ENCODE measurements at regions of chr6 and their contacts with region 1.

Region 1: DNA sequence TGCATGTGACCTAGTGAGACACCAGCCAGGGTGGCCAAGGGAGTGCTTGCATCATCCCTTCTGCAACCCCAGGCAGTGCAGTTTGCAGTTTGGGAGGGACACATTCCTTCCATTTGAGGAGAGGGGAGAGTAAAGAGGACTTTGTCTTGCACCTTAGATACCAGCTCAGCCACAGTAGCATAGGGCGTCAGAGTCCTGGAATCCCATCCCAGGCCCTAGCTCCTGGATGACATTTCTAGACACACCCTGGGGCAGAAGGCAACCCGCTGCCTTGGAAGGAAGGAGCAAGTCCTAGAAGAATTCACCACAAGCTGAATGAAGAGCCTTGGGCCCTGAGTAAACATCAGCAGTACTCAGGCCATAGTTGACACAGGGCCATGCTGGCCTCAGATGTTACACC is 680.4 kb upstream of the IMPG1 start:
- DNase-seq: no peak
- ATAC-seq: no peak
- H3K4me3 ChIP-seq: no peak overlapping the region
- H3K27ac ChIP-seq: no peak overlapping the region
- H3K4me1 ChIP-seq: no peaks in the 10 kb centered on the region
- H3K27me3 ChIP-seq: no peaks in the 10 kb centered on the region
- CTCF ChIP-seq: no peak
- POLR2A ChIP-seq: no peak

Region 2: GRCh38 chr6:76453270-76453669 is 299.6 kb before region 1 on chr6:
- intact Hi-C with region 1: no loop called
- DNase-seq: peak in 1 of 5 donors; percentile 53
- ATAC-seq: peak in 1 of 4 donors; percentile 15
- H3K4me3 ChIP-seq: no peak overlapping the region
- H3K27ac ChIP-seq: no peak overlapping the region
- H3K4me1 ChIP-seq: no peaks in the 10 kb centered on the region
- H3K27me3 ChIP-seq: no peaks in the 10 kb centered on the region
- CTCF ChIP-seq: no peak
- POLR2A ChIP-seq: no peak

Region 3: GRCh38 chr6:76719449-76719848 is 33.4 kb before region 1 on chr6:
- intact Hi-C with region 1: loop called in 1 of 10 experiments (anchors 5 kb)
- DNase-seq: no peak
- ATAC-seq: no peak
- H3K4me3 ChIP-seq: no peak overlapping the region
- H3K27ac ChIP-seq: no peak overlapping the region
- H3K4me1 ChIP-seq: no peaks in the 10 kb centered on the region
- H3K27me3 ChIP-seq: no peaks in the 10 kb centered on the region
- CTCF ChIP-seq: no peak
- POLR2A ChIP-seq: no peak

Region 4: DNA sequence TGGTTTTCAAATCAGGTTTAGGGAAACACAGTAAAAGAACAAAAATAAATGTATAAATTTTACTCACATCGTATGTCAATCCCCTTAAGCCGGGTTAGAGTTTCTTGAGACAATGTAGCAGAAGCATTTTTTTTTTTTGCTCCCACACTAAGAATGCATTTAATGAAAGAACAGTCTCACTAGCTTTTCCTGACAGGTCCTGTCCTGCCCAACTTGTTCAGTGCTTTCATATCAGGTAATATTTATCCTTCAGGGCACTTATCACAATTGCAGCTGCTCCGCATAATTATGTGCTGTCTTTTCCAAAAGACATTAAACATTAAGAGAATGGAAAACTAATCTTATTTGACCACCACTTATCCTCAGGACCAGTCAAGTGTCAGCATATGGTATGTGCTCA is 78.5 kb after region 1 on chr6:
- intact Hi-C with region 1: no loop called
- DNase-seq: no peak
- ATAC-seq: no peak
- H3K4me3 ChIP-seq: no peak overlapping the region
- H3K27ac ChIP-seq: no peak overlapping the region
- H3K4me1 ChIP-seq: no peaks in the 10 kb centered on the region
- H3K27me3 ChIP-seq: no peaks in the 10 kb centered on the region
- CTCF ChIP-seq: no peak
- POLR2A ChIP-seq: no peak

Measured in heart left ventricle (tissue), 16 donors.